ENCODE measurements at regions of chr18 and their contacts with region 1.

Region 1: GRCh38 chr18:12857215-12857905 is 26.7 kb downstream of the PTPN2 start:
- DNase-seq: no peak
- CTCF ChIP-seq: no peak

Region 2: DNA sequence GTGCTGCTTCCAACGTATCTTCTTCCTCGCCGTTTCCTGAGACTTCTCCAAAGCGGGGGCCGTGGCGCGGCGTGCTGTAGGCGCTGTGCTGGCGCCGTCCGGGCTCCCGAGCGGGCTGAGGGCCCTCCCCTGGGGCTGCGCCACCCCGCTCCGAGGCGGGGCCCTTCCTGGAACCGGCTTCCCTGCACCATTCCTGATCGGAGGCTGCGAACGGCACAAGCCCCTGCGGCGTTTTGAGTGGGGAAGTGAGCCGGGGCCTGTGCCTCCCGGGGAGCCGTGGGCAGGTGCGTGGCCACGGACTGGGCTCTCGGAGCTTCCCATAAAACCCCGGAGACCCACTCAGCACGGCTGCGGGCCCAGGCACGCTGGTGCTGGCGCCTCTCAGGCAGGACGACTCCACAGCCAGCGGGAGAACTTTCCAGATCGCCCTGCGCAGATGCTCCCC is 79.8 kb before region 1 on chr18:
- CTCF ChIA-PET with region 1: no interaction called
- POLR2A ChIA-PET with region 1: no interaction called
- DNase-seq: no peak
- CTCF ChIP-seq: no peak

Region 3: DNA sequence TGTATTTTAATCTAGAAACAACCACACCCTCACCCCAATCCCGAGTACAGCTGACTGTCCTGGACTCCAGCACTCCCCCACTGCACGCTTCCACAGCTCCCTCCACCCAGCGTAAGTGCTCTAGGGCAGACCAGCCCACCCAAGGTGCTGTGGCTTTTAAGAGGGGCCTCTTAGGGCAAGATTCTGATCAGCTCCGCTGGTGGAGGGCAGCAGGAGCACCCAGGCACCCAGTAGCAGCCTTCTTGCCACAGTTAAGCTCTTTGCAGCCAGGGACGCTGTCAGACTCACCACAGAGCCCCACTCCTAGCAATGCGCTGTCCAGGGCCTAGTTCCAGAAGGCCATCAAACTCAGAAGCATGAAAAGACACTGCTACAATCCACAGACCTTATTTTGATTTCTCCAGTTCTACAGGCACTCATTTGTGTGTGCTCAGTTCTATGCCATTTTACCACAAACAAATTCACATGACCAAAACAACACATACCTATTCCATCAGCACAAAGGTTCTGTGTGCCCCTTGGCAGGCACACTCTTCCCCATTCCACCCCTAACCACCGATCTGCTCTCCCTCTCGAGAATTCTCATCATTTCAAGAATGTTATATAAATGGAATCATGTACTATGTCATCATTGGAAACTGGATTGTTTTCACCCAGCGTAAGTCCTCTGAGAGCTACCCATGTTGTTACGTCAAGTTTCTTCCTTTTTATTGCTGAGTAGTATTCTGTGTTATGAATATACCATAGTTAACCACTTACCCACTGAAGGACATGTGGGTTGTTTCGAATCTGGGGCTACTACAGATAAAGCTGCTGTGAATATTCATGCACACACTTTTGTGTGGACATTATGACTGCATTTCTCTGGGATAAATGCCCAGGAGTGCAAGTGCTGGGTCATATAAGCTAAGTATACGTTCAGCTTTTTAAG is 13.7 kb before region 1 on chr18:
- CTCF ChIA-PET with region 1: interaction called, 14 read pairs
- POLR2A ChIA-PET with region 1: interaction called, 3 read pairs
- DNase-seq: no peak
- CTCF ChIP-seq: no peak